Endothelial cell of umbilical vein (primary cell): ENCODE measurements at regions of chr3 and their contacts with region 1.

Region 1: GRCh38 chr3:171874251-171874679 is 31.1 kb downstream of the TMEM212 start:
- DNase-seq: peak; percentile 98
- H3K4me3 ChIP-seq: no peak overlapping the region
- H3K27ac ChIP-seq: peak overlapping the region; percentile 97
- H3K4me1 ChIP-seq: peaks cover 53% of the 10 kb centered on the region
- H3K27me3 ChIP-seq: no peaks in the 10 kb centered on the region
- CTCF ChIP-seq: no peak
- POLR2A ChIP-seq: peak; percentile 76

Region 2: GRCh38 chr3:171801738-171802600 is 72.3 kb before region 1 on chr3:
- CTCF ChIA-PET with region 1: interaction called, 3 read pairs
- POLR2A ChIA-PET with region 1: no interaction called
- dilution Hi-C with region 1: no loop called
- intact Hi-C with region 1: loop called (anchors 2 kb)
- DNase-seq: peak; percentile 97
- H3K4me3 ChIP-seq: no peak overlapping the region
- H3K27ac ChIP-seq: peak overlapping the region; percentile 97
- H3K4me1 ChIP-seq: peaks cover 86% of the 10 kb centered on the region
- H3K27me3 ChIP-seq: no peaks in the 10 kb centered on the region
- CTCF ChIP-seq: no peak
- POLR2A ChIP-seq: peak; percentile 40

Region 3: DNA sequence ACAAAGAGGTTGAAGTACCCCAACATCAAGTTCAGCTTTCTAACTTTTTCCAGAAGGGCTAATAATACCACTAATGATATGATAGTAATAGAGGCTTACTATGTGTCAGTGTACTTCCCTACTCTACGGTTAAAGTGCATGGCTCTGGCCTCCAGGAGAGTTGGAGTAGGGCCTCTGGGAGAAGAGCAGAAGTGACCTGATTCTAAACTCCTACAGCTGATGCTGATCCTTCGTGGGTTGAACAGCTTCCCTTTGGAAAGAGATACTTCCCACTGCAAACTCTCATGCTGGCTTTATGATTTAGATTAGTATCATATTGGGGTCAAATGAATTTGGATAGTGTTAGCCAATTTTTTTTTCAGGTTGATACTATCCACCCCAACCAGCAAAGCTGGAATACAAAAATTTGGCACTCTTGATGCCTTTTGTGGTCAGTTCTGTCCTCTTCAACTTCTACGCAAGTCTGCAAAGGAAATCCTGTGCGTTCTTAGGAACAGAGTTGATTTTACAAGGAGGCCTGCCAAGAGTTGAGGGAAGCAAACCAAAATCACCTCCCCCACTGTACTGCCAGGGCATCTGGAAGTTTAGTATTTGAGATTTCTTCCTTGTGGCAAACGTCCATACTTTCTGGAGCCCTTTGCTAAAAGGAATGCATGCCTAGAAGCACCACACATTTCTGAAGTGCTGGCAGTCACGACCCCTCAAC is 13.3 kb before region 1 on chr3:
- CTCF ChIA-PET with region 1: interaction called, 5 read pairs
- POLR2A ChIA-PET with region 1: interaction called, 3 read pairs
- dilution Hi-C with region 1: no loop called
- intact Hi-C with region 1: loop called (anchors 1 kb)
- DNase-seq: peak; percentile 96
- H3K4me3 ChIP-seq: no peak overlapping the region
- H3K27ac ChIP-seq: peak overlapping the region; percentile 95
- H3K4me1 ChIP-seq: peaks cover 57% of the 10 kb centered on the region
- H3K27me3 ChIP-seq: no peaks in the 10 kb centered on the region
- CTCF ChIP-seq: no peak
- POLR2A ChIP-seq: no peak

Region 4: DNA sequence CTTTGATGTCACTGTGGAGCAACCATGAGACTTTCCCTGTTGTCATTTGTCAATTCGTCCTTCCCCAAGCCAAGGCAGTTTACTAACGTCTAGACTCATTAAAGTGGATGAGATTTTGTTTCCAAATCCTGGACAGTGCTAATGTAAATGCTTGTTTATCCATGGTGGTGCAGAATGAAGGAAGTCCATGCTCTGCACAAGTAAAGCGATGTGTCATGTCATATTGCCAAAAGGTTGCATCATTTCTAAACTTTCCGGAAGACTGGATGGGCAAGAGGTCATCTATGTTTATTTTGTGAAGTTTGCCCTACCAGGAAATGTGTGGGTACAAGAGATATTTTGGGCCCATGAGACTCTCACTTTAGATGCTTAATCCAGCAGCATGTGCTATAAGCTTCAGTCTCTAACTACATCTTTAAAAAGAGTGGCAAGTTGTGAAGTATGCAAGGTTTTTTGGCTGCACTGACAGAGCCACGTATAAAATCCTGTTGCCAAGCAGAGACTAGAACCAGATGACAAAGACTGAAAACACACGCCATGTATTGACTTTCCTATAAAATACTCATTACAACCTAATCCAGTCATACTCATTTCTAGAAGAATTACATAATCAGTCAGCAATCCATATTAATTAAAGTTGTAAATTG is 93.0 kb after region 1 on chr3:
- CTCF ChIA-PET with region 1: interaction called, 3 read pairs
- POLR2A ChIA-PET with region 1: no interaction called
- dilution Hi-C with region 1: no loop called
- intact Hi-C with region 1: loop called (anchors 1 kb)
- DNase-seq: peak; percentile 86
- H3K4me3 ChIP-seq: no peak overlapping the region
- H3K27ac ChIP-seq: peak overlapping the region; percentile 71
- H3K4me1 ChIP-seq: peaks cover 20% of the 10 kb centered on the region
- H3K27me3 ChIP-seq: no peaks in the 10 kb centered on the region
- CTCF ChIP-seq: no peak
- POLR2A ChIP-seq: no peak